Left cardiac atrium (tissue), 4 donors: ENCODE measurements at regions of chr7 and their contacts with region 1.

Region 1: GRCh38 chr7:112206238-112207044 is at the starts of genes DOCK4 and ZNF277:
- DNase-seq: peak; percentile 99
- ATAC-seq: peak; percentile 95 to 97
- total RNA-seq, gene DOCK4: 17.1 to 19.3 TPM
- total RNA-seq, gene ZNF277: 14.9 to 16.2 TPM

Region 2: GRCh38 chr7:111953611-111954010 is 252.8 kb before region 1 on chr7:
- intact Hi-C with region 1: loop called in 1 of 2 experiments (anchors 10 kb)
- DNase-seq: no peak
- ATAC-seq: peak; percentile 79 to 94

Region 3: GRCh38 chr7:112069879-112070321 is 136.5 kb before region 1 on chr7:
- intact Hi-C with region 1: loop called in 1 of 2 experiments (anchors 10 kb)
- DNase-seq: no peak
- ATAC-seq: no peak

Region 4: DNA sequence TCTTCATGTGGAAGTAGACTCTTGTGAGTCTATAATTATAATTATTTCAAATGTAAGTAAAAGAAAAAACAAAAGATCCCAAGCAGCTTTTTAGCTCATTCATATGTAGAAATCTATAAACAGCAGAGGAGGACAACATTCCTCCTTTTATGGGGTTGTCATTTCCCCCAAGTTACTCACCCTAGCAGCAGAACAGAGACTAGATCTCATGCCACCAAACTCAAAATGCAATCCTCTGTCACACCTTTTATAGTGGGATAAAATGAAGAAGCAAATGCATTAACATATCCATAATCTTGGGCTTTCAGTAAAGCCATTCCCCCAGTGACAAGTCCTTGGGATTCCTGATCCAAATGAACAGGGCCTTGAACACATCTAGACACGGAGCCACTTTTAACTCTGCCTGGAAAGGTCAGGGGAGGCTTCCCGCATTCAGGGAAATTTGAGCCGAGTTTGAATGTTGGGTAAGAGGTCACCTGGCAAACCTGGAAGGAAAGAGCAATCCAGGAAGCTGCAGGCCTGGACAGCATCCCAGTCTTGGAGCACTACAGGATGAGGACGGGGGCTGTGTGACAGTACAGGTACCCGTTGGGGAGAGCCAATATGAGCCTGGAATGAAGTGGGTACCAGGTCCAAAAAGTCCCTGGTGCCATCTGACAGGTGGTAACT is 76.7 kb before region 1 on chr7:
- intact Hi-C with region 1: loop called in 1 of 2 experiments (anchors 10 kb)
- DNase-seq: no peak
- ATAC-seq: no peak

Region 5: GRCh38 chr7:112398534-112398933 is 192.1 kb after region 1 on chr7:
- intact Hi-C with region 1: loop called in 1 of 2 experiments (anchors 10 kb)
- DNase-seq: no peak
- ATAC-seq: no peak